Gastrocnemius medialis (tissue), 4 donors: ENCODE measurements at regions of chr6 and their contacts with region 1.

Region 1: GRCh38 chr6:20056350-20056992 is 155.8 kb downstream of the MBOAT1 start:
- DNase-seq: no peak
- ATAC-seq: no peak
- H3K4me3 ChIP-seq: no peak overlapping the region
- H3K27ac ChIP-seq: no peak overlapping the region
- H3K4me1 ChIP-seq: no peaks in the 10 kb centered on the region
- H3K27me3 ChIP-seq: no peaks in the 10 kb centered on the region
- CTCF ChIP-seq: peak in 3 of 5 experiments; percentile 18 to 36 (median 18)
- POLR2A ChIP-seq: no peak

Region 2: GRCh38 chr6:18595774-18596530 is 1460.5 kb before region 1 on chr6:
- in situ Hi-C with region 1: loop called in 2 of 4 experiments (anchors 25 kb)
- intact Hi-C with region 1: loop called (anchors 5 kb)
- DNase-seq: peak; percentile 15 to 25
- ATAC-seq: peak; percentile 75 to 88
- H3K4me3 ChIP-seq: no peak overlapping the region
- H3K27ac ChIP-seq: no peak overlapping the region
- H3K4me1 ChIP-seq: no peaks in the 10 kb centered on the region
- H3K27me3 ChIP-seq: no peaks in the 10 kb centered on the region
- CTCF ChIP-seq: peak; percentile 65 to 88 (median 80)
- POLR2A ChIP-seq: no peak

Region 3: GRCh38 chr6:18601516-18602020 is 1454.9 kb before region 1 on chr6:
- in situ Hi-C with region 1: loop called in 2 of 4 experiments (anchors 25 kb)
- intact Hi-C with region 1: loop called (anchors 5 kb)
- DNase-seq: no peak
- ATAC-seq: no peak
- H3K4me3 ChIP-seq: no peak overlapping the region
- H3K27ac ChIP-seq: no peak overlapping the region
- H3K4me1 ChIP-seq: no peaks in the 10 kb centered on the region
- H3K27me3 ChIP-seq: no peaks in the 10 kb centered on the region
- CTCF ChIP-seq: no peak
- POLR2A ChIP-seq: no peak

Region 4: GRCh38 chr6:20038410-20039204 is 17.9 kb before region 1 on chr6:
- in situ Hi-C with region 1: no loop called
- intact Hi-C with region 1: no loop called
- DNase-seq: no peak
- ATAC-seq: no peak
- H3K4me3 ChIP-seq: no peak overlapping the region
- H3K27ac ChIP-seq: no peak overlapping the region
- H3K4me1 ChIP-seq: no peaks in the 10 kb centered on the region
- H3K27me3 ChIP-seq: no peaks in the 10 kb centered on the region
- CTCF ChIP-seq: no peak
- POLR2A ChIP-seq: no peak

Region 5: GRCh38 chr6:20427856-20428255 is 371.4 kb after region 1 on chr6:
- in situ Hi-C with region 1: no loop called
- intact Hi-C with region 1: no loop called
- DNase-seq: no peak
- ATAC-seq: no peak
- H3K4me3 ChIP-seq: no peak overlapping the region
- H3K27ac ChIP-seq: peak overlapping the region in 2 of 4 donors; percentile 68 to 72
- H3K4me1 ChIP-seq: peaks cover 16 to 55% of the 10 kb centered on the region in 2 donors
- H3K27me3 ChIP-seq: no peaks in the 10 kb centered on the region
- CTCF ChIP-seq: no peak
- POLR2A ChIP-seq: no peak